Activated naive CD4-positive, alpha-beta T cell treated with anti-CD3 and anti-CD28 coated beads for 36 hours (primary cell): ENCODE measurements at regions of chrX and their contacts with region 1.

Region 1: GRCh38 chrX:150772150-150772970 is 79.2 kb downstream of the MTMR1 start:
- DNase-seq: peak; percentile 84
- H3K4me3 Mint-ChIP-seq: no peak overlapping the region
- H3K27ac Mint-ChIP-seq: no peak overlapping the region
- H3K4me1 Mint-ChIP-seq: peaks cover 6% of the 10 kb centered on the region
- H3K27me3 Mint-ChIP-seq: no peaks in the 10 kb centered on the region

Region 2: DNA sequence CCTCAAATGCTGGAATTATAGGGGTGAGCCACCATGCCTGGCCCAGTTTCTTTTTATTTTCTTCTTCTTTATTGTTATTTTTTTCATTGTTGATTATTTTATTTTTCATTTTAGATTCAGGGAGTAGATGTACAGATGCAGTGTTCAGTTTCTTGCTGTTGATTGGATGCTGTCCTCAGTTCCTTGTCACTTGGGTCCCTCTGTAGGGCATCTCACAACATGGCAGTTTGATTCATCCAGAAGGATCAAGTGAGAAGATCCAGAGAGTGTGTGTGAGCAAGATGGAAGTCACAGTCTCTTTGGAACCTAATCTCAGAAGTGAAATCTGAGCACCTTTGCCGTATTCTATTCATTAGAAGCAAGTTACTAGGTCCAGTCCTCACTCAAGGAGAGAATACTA is 231.7 kb after region 1 on chrX:
- CTCF ChIA-PET with region 1: interaction called, 4 read pairs
- intact Hi-C with region 1: loop called (anchors 1 kb)
- DNase-seq: no peak
- H3K4me3 Mint-ChIP-seq: no peak overlapping the region
- H3K27ac Mint-ChIP-seq: no peak overlapping the region
- H3K4me1 Mint-ChIP-seq: no peaks in the 10 kb centered on the region
- H3K27me3 Mint-ChIP-seq: no peaks in the 10 kb centered on the region

Region 3: DNA sequence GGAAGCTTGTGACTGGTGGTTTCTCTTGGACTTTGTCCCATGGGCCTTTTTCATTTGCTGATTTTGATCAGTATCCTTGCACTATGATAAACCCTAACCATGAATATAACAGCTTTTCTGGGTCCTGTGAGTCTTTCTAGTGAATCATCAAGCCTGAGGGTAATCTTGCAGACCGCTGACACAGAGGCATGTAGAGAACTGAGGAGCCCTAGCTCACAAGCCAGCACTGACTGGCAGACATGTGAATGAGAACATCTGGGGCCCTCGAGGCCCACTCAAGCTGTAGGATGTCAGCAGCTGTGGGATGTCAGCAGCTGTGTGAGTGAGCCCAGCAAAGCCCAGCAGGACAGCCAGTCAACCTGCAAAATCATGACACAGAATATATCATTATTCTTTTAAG is 247.5 kb after region 1 on chrX:
- CTCF ChIA-PET with region 1: no interaction called
- intact Hi-C with region 1: no loop called
- DNase-seq: no peak
- H3K4me3 Mint-ChIP-seq: no peak overlapping the region
- H3K27ac Mint-ChIP-seq: no peak overlapping the region
- H3K4me1 Mint-ChIP-seq: no peaks in the 10 kb centered on the region
- H3K27me3 Mint-ChIP-seq: no peaks in the 10 kb centered on the region

Region 4: GRCh38 chrX:151082076-151082948 is 310.0 kb after region 1 on chrX:
- CTCF ChIA-PET with region 1: interaction called, 48 read pairs
- intact Hi-C with region 1: loop called (anchors 1 kb)
- DNase-seq: peak; percentile 61
- H3K4me3 Mint-ChIP-seq: no peak overlapping the region
- H3K27ac Mint-ChIP-seq: no peak overlapping the region
- H3K4me1 Mint-ChIP-seq: peaks cover 2% of the 10 kb centered on the region
- H3K27me3 Mint-ChIP-seq: peaks cover 3% of the 10 kb centered on the region